Activated T-helper 2 cell treated with anti-CD3 and anti-CD28 coated beads, Interferon-gamma antibody, Interleukin-2, Interleukin-4, amounts not matched to agents 10 μg/mL and 5 μg/mL and 100 μg/mL, durations not matched to agents 14 hours and 24 hours and 36 hours (primary cell): ENCODE measurements at regions of chr12 and their contacts with region 1.

Region 1: GRCh38 chr12:111024205-111024801 is 103.9 kb upstream of the MYL2 start:
- DNase-seq: no peak
- H3K4me3 Mint-ChIP-seq: no peak overlapping the region
- H3K27ac Mint-ChIP-seq: no peak overlapping the region
- H3K4me1 Mint-ChIP-seq: peaks cover 3% of the 10 kb centered on the region
- H3K27me3 Mint-ChIP-seq: peaks cover 16% of the 10 kb centered on the region

Region 2: DNA sequence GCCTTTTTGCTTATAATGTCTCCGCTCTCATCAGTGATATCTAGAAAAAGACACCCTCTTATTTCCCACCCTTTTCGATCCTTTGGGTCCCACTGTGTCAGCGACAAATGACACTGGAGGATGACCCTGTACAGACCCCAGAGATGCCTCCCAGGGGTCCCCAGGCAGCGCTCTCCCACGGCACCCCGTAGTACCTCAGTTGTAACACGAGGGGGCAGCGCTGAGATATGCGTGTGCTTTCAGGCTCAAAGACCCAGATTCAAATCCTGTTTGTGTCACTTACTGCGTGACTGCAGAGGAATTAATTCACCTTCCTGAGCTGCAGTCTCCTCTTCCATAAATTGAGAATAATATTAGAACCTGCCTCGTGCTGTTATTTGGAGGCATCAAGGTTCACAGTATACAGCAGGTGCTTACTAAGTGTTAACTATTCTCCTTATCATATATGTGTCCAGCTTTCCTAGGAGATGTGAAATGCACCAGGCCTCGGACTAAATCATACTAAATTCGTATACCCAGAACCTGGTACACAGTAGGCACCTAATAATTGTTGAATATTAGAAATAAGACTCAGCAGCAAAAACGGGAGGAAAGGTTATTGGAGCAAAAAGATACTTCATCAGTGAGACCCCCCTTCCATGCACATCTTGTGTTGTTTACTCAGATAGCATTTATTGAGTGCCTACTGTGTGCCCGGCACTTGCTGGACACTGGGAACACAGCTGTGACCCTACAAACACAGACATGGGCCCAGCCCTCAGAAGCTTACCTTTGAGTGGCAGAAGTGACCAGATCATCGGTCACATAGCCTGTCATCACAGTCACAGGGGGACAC is 244.7 kb after region 1 on chr12:
- intact Hi-C with region 1: loop called (anchors 5 kb)
- DNase-seq: no peak
- H3K4me3 Mint-ChIP-seq: no peak overlapping the region
- H3K27ac Mint-ChIP-seq: no peak overlapping the region
- H3K4me1 Mint-ChIP-seq: no peaks in the 10 kb centered on the region
- H3K27me3 Mint-ChIP-seq: no peaks in the 10 kb centered on the region

Region 3: GRCh38 chr12:111313833-111314259 is 289.5 kb after region 1 on chr12:
- intact Hi-C with region 1: loop called (anchors 10 kb)
- DNase-seq: peak; percentile 43
- H3K4me3 Mint-ChIP-seq: no peak overlapping the region
- H3K27ac Mint-ChIP-seq: no peak overlapping the region
- H3K4me1 Mint-ChIP-seq: peaks cover 3% of the 10 kb centered on the region
- H3K27me3 Mint-ChIP-seq: peaks cover 2% of the 10 kb centered on the region